OCI-LY7 (cell line): ENCODE measurements at regions of chr2 and their contacts with region 1.

Region 1: DNA sequence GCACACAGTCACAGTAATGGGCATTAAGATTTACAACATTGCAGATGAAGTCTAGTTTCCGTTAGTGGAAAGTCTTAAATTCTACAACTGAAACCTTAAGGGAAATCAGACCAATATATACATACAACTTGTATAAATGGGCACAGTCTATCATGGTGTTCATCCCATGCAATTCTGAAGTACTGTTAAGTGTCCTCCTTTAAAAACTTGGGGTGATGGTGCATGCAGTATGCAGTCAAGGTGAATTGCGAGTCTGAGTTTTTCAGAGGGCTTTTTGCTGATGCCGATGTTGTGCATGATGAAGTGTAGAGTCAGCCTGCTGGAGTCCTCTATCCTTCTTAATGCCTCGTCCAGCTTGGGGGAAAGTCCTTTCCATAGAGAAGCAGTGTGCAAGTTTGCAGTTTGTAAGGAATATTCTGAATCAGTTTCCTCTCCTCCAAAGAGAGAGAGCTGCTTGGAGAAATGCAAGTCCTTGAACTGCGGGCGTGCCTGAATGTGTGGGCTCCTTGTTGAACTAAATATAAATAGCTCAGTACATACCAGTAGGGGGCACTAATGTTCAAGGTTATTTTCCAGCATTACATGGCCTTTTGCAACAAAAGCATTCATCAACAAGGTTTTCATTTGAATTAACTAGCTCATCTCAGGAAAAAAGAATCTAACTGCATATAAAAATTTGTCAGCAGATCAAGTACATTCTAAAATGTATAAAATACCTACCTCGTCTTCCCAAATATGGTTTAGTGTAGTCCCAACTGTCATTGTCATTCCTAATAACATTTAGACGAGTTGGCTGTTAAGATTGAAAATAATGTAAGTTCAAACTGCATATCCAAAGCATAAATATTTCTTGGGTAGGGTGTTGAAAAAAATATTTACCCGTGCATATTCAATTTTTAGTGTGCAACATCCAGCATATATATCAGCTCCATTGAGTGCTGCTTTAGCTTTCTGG is 21.3 kb downstream of the HNRNPLL start:
- DNase-seq: peak; percentile 87
- H3K4me3 ChIP-seq: no peak overlapping the region
- H3K27ac ChIP-seq: no peak overlapping the region
- H3K4me1 ChIP-seq: peaks cover 8% of the 10 kb centered on the region
- CTCF ChIP-seq: peak; percentile 97

Region 2: GRCh38 chr2:38535744-38536506 is 45.5 kb before region 1 on chr2:
- CTCF ChIA-PET with region 1: interaction called, 4 read pairs
- POLR2A ChIA-PET with region 1: interaction called, 4 read pairs
- intact Hi-C with region 1: loop called (anchors 2 kb)
- DNase-seq: peak; percentile 87
- H3K4me3 ChIP-seq: peak overlapping the region; percentile 62
- H3K27ac ChIP-seq: no peak overlapping the region
- H3K4me1 ChIP-seq: peaks cover 43% of the 10 kb centered on the region
- CTCF ChIP-seq: peak; percentile 87

Region 3: DNA sequence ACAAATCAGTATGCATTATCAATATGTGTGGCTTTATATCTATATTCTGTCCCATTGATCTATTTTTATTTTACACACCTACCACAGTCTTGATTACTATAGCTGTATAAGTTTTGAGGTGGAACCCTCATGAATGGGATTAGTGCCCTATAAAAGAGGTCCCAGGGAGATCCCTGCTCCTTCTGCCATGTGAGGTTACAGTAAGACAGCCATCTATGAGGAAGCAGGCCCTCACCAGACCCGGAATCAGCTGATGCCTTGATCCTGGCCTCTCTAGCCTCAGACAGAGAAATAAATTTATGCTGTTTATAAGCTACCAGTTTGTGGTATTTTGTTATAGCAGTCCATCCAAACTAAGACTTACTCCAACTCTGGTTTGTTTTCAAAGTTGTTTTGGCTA is 33.7 kb before region 1 on chr2:
- CTCF ChIA-PET with region 1: no interaction called
- POLR2A ChIA-PET with region 1: interaction called, 10 read pairs
- intact Hi-C with region 1: no loop called
- DNase-seq: no peak
- H3K4me3 ChIP-seq: no peak overlapping the region
- H3K27ac ChIP-seq: no peak overlapping the region
- H3K4me1 ChIP-seq: peaks cover 4% of the 10 kb centered on the region
- CTCF ChIP-seq: no peak

Region 4: GRCh38 chr2:38556006-38556801 is 25.3 kb before region 1 on chr2:
- CTCF ChIA-PET with region 1: no interaction called
- POLR2A ChIA-PET with region 1: interaction called, 13 read pairs
- intact Hi-C with region 1: no loop called
- DNase-seq: no peak
- H3K4me3 ChIP-seq: no peak overlapping the region
- H3K27ac ChIP-seq: no peak overlapping the region
- H3K4me1 ChIP-seq: peaks cover 7% of the 10 kb centered on the region
- CTCF ChIP-seq: no peak

Region 5: DNA sequence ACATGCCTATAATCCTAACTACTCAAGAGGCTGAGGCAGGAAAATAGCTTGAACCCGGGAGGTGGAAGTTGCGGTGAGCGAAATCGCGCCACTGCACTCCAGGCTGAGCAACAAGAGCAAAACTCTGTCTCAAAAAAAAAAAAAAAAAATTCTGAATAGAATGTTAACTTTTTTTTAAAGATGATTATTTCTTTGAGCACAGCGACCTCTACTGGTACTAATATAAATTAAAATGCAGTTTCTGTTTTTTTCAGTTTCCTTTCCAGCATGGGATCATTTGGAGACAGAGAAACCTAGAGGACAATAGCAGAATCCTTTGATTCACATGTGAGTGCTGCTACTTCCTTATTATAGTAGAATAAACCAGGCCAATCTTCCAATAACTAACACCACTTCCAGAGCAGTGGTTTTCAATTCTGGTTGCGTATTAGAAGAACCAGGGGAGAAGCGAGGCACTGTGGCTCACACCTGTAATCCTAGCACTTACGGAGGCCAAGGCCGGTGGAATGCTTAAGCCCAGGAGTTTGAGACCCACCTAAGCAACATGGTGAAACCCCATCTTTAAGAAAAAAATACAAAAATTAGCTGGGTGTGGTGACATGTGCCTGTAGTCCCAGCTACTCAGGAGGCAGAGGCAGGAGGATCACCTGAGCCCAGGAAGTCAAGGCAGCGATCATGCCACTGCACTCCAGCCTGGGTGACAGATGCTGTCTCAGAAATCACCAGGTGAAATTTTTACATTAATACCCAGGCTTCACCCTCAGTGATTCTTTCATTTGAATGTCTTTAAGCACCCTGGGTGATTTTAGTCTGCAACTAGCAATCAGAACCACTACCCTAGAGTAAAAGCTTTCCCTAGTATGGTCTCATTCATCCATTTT is 159.6 kb after region 1 on chr2:
- CTCF ChIA-PET with region 1: no interaction called
- POLR2A ChIA-PET with region 1: interaction called, 3 read pairs
- intact Hi-C with region 1: loop called (anchors 5 kb)
- DNase-seq: peak; percentile 55
- H3K4me3 ChIP-seq: no peak overlapping the region
- H3K27ac ChIP-seq: peak overlapping the region; percentile 5
- H3K4me1 ChIP-seq: peaks cover 8% of the 10 kb centered on the region
- CTCF ChIP-seq: peak; percentile 88

Region 6: DNA sequence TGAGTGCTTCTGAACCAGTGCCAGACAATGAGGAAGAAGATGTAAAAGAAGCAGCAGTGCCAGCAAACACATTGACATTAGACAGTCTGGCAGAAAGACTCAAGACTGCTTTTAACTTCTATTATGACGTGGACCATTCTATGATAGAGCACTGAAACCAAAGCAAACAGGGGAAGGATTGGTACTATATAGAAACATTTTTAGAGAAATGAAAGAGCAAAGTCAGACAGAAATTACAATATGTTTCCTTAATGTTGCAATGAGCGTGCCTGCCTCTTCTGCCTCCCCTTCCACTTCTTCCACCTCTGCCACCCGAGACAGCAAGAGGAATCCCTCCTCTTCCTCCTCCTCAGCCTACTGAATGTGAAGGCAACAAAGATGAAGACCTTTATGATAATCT is 254.5 kb after region 1 on chr2:
- CTCF ChIA-PET with region 1: no interaction called
- POLR2A ChIA-PET with region 1: no interaction called
- intact Hi-C with region 1: loop called (anchors 2 kb)
- DNase-seq: no peak
- H3K4me3 ChIP-seq: no peak overlapping the region
- H3K27ac ChIP-seq: no peak overlapping the region
- H3K4me1 ChIP-seq: no peaks in the 10 kb centered on the region
- CTCF ChIP-seq: no peak